CD8-positive, alpha-beta memory T cell (primary cell): ENCODE measurements at regions of chr7 and their contacts with region 1.

Region 1: GRCh38 chr7:100132697-100133151 is 6.0 kb downstream of the MBLAC1 start:
- DNase-seq: peak; percentile 34 to 73 (median 46)
- H3K4me3 ChIP-seq: no peak overlapping the region
- H3K4me3 Mint-ChIP-seq: peak overlapping the region in 2 of 7 donors; percentile 10 to 29
- H3K27ac ChIP-seq: no peak overlapping the region
- H3K27ac Mint-ChIP-seq: peak overlapping the region in 3 of 8 donors; percentile 25 to 51 (median 50)
- H3K4me1 ChIP-seq: peaks cover 19% of the 10 kb centered on the region
- H3K4me1 Mint-ChIP-seq: peaks cover 13 to 25% (median 17%) of the 10 kb centered on the region in 3 donors
- H3K27me3 ChIP-seq: no peaks in the 10 kb centered on the region
- H3K27me3 Mint-ChIP-seq: no peaks in the 10 kb centered on the region

Region 2: GRCh38 chr7:99997545-99998137 is 135.1 kb before region 1 on chr7:
- CTCF ChIA-PET with region 1: interaction called, 11 read pairs
- POLR2A ChIA-PET with region 1: interaction called, 3 read pairs
- DNase-seq: peak; percentile 58 to 86 (median 79)
- H3K4me3 ChIP-seq: peak overlapping the region; percentile 12
- H3K4me3 Mint-ChIP-seq: peak overlapping the region; percentile 46 to 88 (median 77)
- H3K27ac ChIP-seq: peak overlapping the region; percentile 0
- H3K27ac Mint-ChIP-seq: peak overlapping the region; percentile 62 to 98 (median 93)
- H3K4me1 ChIP-seq: peaks cover 15% of the 10 kb centered on the region
- H3K4me1 Mint-ChIP-seq: peaks cover 12 to 15% (median 13%) of the 10 kb centered on the region in 3 donors
- H3K27me3 ChIP-seq: no peaks in the 10 kb centered on the region
- H3K27me3 Mint-ChIP-seq: peaks cover 3 to 9% of the 10 kb centered on the region in 2 donors

Region 3: GRCh38 chr7:100148559-100149350 is 16.0 kb after region 1 on chr7 and contains the start of gene LAMTOR4:
- CTCF ChIA-PET with region 1: interaction called, 23 read pairs
- POLR2A ChIA-PET with region 1: interaction called, 3 read pairs
- DNase-seq: peak; percentile 97 to 99 (median 98)
- H3K4me3 ChIP-seq: peak within 1 kb of the TSS; percentile 83
- H3K4me3 Mint-ChIP-seq: peak within 1 kb of the TSS; percentile 82 to 99 (median 95)
- H3K27ac ChIP-seq: peak within 1 kb of the TSS; percentile 87
- H3K27ac Mint-ChIP-seq: peak within 1 kb of the TSS; percentile 85 to 99 (median 96)
- H3K4me1 ChIP-seq: peaks cover 29% of the 10 kb centered on the region
- H3K4me1 Mint-ChIP-seq: peaks cover 27 to 44% (median 43%) of the 10 kb centered on the region in 3 donors
- H3K27me3 ChIP-seq: no peaks in the 10 kb centered on the region
- H3K27me3 Mint-ChIP-seq: no peaks in the 10 kb centered on the region
- total RNA-seq, gene LAMTOR4: 125 to 130 TPM

Region 4: GRCh38 chr7:100208911-100209408 is 76.2 kb after region 1 on chr7:
- CTCF ChIA-PET with region 1: interaction called, 88 read pairs
- POLR2A ChIA-PET with region 1: no interaction called
- DNase-seq: no peak
- H3K4me3 ChIP-seq: peak overlapping the region; percentile 39
- H3K4me3 Mint-ChIP-seq: peak overlapping the region; percentile 37 to 80 (median 58)
- H3K27ac ChIP-seq: no peak overlapping the region
- H3K27ac Mint-ChIP-seq: peak overlapping the region in 7 of 8 donors; percentile 16 to 89 (median 81)
- H3K4me1 ChIP-seq: peaks cover 43% of the 10 kb centered on the region
- H3K4me1 Mint-ChIP-seq: peaks cover 41 to 45% (median 45%) of the 10 kb centered on the region in 3 donors
- H3K27me3 ChIP-seq: no peaks in the 10 kb centered on the region
- H3K27me3 Mint-ChIP-seq: peaks cover 0 to 1% of the 10 kb centered on the region in 2 donors

Region 5: GRCh38 chr7:100346921-100347320 is 214.2 kb after region 1 on chr7:
- CTCF ChIA-PET with region 1: interaction called, 19 read pairs
- POLR2A ChIA-PET with region 1: no interaction called
- DNase-seq: no peak
- H3K4me3 ChIP-seq: no peak overlapping the region
- H3K4me3 Mint-ChIP-seq: peak overlapping the region in 1 of 7 donors; percentile 15
- H3K27ac ChIP-seq: no peak overlapping the region
- H3K27ac Mint-ChIP-seq: peak overlapping the region in 7 of 8 donors; percentile 35 to 94 (median 67)
- H3K4me1 ChIP-seq: peaks cover 19% of the 10 kb centered on the region
- H3K4me1 Mint-ChIP-seq: peaks cover 26 to 45% (median 30%) of the 10 kb centered on the region in 3 donors
- H3K27me3 ChIP-seq: no peaks in the 10 kb centered on the region
- H3K27me3 Mint-ChIP-seq: no peaks in the 10 kb centered on the region